A549 (cell line): ENCODE measurements at regions of chr5 and their contacts with region 1.

Region 1: GRCh38 chr5:59264639-59265240 is 628.8 kb downstream of the PDE4D start:
- DNase-seq: no peak
- ATAC-seq: peak; percentile 62
- H3K4me3 ChIP-seq: peak overlapping the region; percentile 8; the same call in 1 of the 3 replicates
- H3K27ac ChIP-seq: peak overlapping the region; percentile 80 to 82
- H3K4me1 ChIP-seq: peaks cover 100% of the 10 kb centered on the region
- CTCF ChIP-seq: no peak
- EP300 ChIP-seq: no peak
- POLR2A ChIP-seq: no peak
- RAD21 ChIP-seq: no peak

Region 2: GRCh38 chr5:59275510-59276324 is 11.0 kb after region 1 on chr5:
- CTCF ChIA-PET with region 1: interaction called, 15 read pairs
- POLR2A ChIA-PET with region 1: interaction called, 3 read pairs
- DNase-seq: peak in 1 of 2 experiments; percentile 91
- ATAC-seq: peak; percentile 81 to 85
- H3K4me3 ChIP-seq: peak overlapping the region; percentile 54
- H3K27ac ChIP-seq: peak overlapping the region; percentile 72 to 88
- H3K4me1 ChIP-seq: peaks cover 59% of the 10 kb centered on the region
- CTCF ChIP-seq: no peak
- EP300 ChIP-seq: no peak
- POLR2A ChIP-seq: no peak
- RAD21 ChIP-seq: no peak; a peak in 2 of 5 replicates